Heart right ventricle (tissue), 16 donors: ENCODE measurements at regions of chr11 and their contacts with region 1.

Region 1: DNA sequence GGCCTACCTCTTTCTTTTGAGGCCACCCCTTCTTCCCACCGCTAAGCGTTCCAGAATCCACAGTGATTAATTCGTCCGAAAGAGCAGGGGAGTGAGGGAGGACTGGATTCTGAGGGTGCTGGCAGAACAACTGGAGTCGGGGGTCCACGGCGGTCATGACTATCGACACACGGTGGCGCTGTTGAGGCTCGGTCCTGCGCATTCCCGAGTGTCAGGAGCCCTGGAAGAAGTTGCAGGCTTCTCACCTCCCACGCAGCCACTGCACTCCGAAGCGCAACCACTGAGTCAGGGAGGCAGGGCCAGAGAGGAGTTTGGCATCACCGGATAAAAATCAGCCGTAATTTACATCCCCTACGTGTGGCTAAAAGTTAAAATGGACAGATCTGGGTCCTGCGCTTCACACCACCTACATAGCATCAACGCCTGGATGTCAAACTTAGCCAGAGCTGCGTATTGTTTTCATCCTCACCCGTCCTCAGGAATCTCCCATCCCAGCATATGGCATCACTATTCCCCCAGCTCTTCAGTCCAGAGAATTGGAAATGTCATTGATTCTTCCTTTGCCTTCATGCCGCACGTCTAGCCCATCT is 10.7 kb upstream of the CTSF start:
- DNase-seq: peak; percentile 82 to 85
- ATAC-seq: peak; percentile 88 to 94 (median 92)
- H3K4me3 ChIP-seq: no peak overlapping the region
- H3K27ac ChIP-seq: no peak overlapping the region
- H3K4me1 ChIP-seq: peaks cover 0 to 8% (median 6%) of the 10 kb centered on the region in 9 donors
- H3K27me3 ChIP-seq: no peaks in the 10 kb centered on the region
- CTCF ChIP-seq: peak; percentile 70 to 88 (median 85)

Region 2: GRCh38 chr11:66559142-66559865 is 19.8 kb before region 1 on chr11:
- intact Hi-C with region 1: no loop called
- DNase-seq: peak in 1 of 2 donors; percentile 41
- ATAC-seq: peak in 4 of 8 donors; percentile 23 to 43 (median 33)
- H3K4me3 ChIP-seq: peak overlapping the region in 1 of 10 donors; percentile 11
- H3K27ac ChIP-seq: no peak overlapping the region
- H3K4me1 ChIP-seq: peaks cover 4 to 9% (median 7%) of the 10 kb centered on the region in 9 donors
- H3K27me3 ChIP-seq: peaks cover 0 to 30% (median 16%) of the 10 kb centered on the region in 7 donors
- CTCF ChIP-seq: no peak

Region 3: GRCh38 chr11:66835768-66836405 is 256.8 kb after region 1 on chr11:
- intact Hi-C with region 1: loop called in 7 of 10 experiments (anchors 2 to 10 kb)
- DNase-seq: no peak
- ATAC-seq: no peak
- H3K4me3 ChIP-seq: no peak overlapping the region
- H3K27ac ChIP-seq: no peak overlapping the region
- H3K4me1 ChIP-seq: peaks cover 0 to 8% (median 0%) of the 10 kb centered on the region in 9 donors
- H3K27me3 ChIP-seq: no peaks in the 10 kb centered on the region
- CTCF ChIP-seq: no peak

Region 4: DNA sequence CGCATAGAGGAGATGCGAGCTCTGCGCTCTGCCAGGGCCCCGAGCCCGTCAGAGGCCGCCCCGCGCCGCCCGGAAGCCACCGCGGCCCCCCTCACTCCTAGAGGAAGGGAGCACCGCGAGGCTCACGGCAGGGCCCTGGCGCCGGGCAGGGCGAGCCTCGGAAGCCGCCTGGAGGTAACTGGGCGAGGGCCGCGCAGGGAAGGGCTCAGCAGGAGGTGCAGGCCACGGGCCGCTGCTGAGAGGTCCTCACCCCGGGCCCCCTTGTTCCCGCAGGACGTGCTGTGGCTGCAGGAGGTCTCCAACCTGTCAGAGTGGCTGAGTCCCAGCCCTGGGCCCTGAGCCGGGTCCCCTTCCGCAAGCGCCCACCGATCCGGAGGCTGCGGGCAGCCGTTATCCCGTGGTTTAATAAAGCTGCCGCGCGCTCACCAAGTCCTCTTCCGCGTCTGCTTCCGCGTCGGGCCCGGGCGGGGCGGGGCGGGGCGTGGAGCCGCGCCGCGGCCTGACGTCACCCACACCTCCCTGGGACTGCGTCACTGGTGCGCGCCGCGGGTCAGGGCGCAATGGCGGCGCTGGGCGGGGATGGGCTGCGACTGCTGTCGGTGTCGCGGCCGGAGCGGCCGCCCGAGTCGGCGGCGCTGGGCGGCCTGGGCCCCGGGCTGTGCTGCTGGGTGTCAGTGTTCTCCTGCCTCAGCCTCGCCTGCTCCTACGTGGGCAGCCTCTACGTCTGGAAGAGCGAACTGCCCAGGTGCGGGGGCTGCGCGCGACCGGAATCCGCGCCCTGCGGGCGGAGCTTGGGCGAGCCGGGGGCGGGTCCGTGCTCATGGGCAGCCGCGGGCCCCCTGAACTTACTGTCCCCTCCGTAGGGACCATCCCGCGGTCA is 264.0 kb after region 1 on chr11 and contains the start of gene RCE1:
- intact Hi-C with region 1: loop called in 5 of 10 experiments (anchors 10 kb)
- DNase-seq: peak; percentile 90 to 92
- ATAC-seq: peak; percentile 95 to 98 (median 97)
- H3K4me3 ChIP-seq: peak within 1 kb of the TSS; percentile 85 to 100 (median 91)
- H3K27ac ChIP-seq: peak within 1 kb of the TSS; percentile 88 to 100 (median 97)
- H3K4me1 ChIP-seq: peaks cover 9 to 41% (median 24%) of the 10 kb centered on the region in 9 donors
- H3K27me3 ChIP-seq: no peaks in the 10 kb centered on the region
- CTCF ChIP-seq: no peak
- total RNA-seq, gene RCE1: 2.5 to 7.5 (median 4.9) TPM